ENCODE measurements at regions of chr18 and their contacts with region 1.

Region 1: DNA sequence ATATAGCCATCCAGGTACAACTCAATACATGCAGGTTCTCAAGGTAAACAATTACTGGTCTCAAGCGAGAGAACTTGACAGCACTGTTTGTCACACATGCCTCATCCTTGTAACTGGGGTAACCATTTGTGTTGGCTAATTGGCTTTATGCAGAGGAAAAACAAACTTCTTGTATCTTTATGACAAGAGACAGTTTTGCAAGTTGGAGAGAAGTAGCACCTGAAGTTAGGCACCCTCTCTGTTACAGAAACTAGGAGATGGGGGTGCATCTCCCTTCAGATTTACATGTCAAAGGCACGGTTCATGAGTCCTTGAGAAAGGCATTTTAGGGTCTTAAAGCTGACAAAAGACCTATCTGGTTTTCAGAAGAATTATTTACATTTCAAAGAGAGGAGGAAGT is 241.7 kb downstream of the CD226 start:
- DNase-seq: no peak
- H3K4me3 ChIP-seq: no peak overlapping the region
- H3K27ac ChIP-seq: no peak overlapping the region
- H3K4me1 ChIP-seq: no peaks in the 10 kb centered on the region
- H3K27me3 ChIP-seq: no peaks in the 10 kb centered on the region
- CTCF ChIP-seq: no peak
- POLR2A ChIP-seq: no peak

Region 2: DNA sequence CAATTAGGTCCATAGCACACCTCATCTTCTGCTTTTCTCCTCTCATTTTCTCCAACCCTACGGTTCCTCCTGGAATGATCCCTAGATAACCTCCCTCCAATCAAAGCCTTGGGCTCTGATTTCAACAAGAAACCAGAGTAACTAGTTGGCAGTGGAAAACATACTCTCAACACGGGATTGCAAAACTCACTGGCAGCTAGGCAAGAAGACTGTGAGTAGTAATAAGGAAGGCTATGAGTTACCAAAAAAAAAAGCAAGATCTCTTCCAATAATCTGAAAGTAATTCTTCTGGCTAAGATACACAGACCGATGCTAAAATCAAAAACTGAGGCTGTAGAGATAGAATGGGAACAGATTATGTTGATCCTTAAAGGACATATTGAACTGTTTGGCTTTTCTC is 936.5 kb before region 1 on chr18:
- intact Hi-C with region 1: loop called (anchors 5 kb)
- DNase-seq: peak in 1 of 2 donors; percentile 31
- H3K4me3 ChIP-seq: no peak overlapping the region
- H3K27ac ChIP-seq: peak overlapping the region in 1 of 2 donors; percentile 32
- H3K4me1 ChIP-seq: no peaks in the 10 kb centered on the region
- H3K27me3 ChIP-seq: no peaks in the 10 kb centered on the region
- CTCF ChIP-seq: no peak
- POLR2A ChIP-seq: no peak